ENCODE measurements at regions of chr7 and their contacts with region 1.

Region 1: DNA sequence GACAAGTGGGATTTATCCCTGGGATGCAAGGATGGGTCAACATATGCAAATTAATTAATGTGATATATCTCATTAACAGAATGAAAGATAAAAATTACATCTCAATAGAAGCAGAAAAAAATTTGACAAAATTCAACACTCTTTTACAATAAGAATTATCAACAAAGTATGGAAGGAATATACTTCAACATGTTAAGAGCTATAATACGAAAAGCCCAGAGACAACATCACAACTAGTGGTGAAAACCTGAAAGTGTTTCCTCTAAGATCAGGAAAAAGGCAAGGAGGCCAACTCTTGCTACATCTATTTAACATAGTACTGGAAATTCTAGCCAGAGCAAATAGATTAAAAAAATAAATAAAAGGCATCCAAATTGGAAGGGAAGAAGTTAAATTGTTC is 970.0 kb upstream of the POT1 start:
- DNase-seq: no peak
- ATAC-seq: no peak
- H3K4me3 ChIP-seq: no peak overlapping the region
- H3K4me3 Mint-ChIP-seq: no peak overlapping the region
- H3K27ac ChIP-seq: no peak overlapping the region
- H3K27ac Mint-ChIP-seq: no peak overlapping the region
- H3K4me1 ChIP-seq: no peaks in the 10 kb centered on the region
- H3K4me1 Mint-ChIP-seq: no peaks in the 10 kb centered on the region
- H3K27me3 ChIP-seq: no peaks in the 10 kb centered on the region
- H3K27me3 Mint-ChIP-seq: no peaks in the 10 kb centered on the region
- CTCF ChIP-seq: no peak

Region 2: DNA sequence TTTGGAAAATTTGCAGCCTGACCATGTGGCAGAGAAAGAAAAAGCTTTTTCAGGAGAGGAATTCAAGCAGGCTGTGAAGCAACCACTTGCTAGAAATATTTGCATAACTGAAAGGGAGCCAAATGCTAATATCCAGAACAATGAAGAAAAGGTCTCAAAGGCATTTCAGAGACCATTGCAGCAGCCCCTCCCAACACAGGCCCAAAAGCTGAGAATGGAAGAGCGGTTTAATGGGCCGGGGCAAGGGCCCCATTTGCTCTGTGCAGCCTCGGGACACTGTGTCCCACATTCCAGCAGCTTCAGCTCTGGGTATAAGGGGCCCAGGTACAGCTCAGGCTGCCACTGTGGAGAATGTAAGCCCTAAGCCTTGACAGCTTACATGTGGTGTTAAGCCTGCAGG is 51.9 kb before region 1 on chr7:
- CTCF ChIA-PET with region 1: no interaction called
- POLR2A ChIA-PET with region 1: no interaction called
- intact Hi-C with region 1: no loop called
- DNase-seq: no peak
- ATAC-seq: no peak
- H3K4me3 ChIP-seq: no peak overlapping the region
- H3K4me3 Mint-ChIP-seq: no peak overlapping the region
- H3K27ac ChIP-seq: no peak overlapping the region
- H3K27ac Mint-ChIP-seq: no peak overlapping the region
- H3K4me1 ChIP-seq: no peaks in the 10 kb centered on the region
- H3K4me1 Mint-ChIP-seq: no peaks in the 10 kb centered on the region
- H3K27me3 ChIP-seq: no peaks in the 10 kb centered on the region
- H3K27me3 Mint-ChIP-seq: no peaks in the 10 kb centered on the region
- CTCF ChIP-seq: no peak

Region 3: GRCh38 chr7:125878235-125878928 is 21.2 kb before region 1 on chr7:
- CTCF ChIA-PET with region 1: no interaction called
- POLR2A ChIA-PET with region 1: no interaction called
- intact Hi-C with region 1: no loop called
- DNase-seq: no peak
- ATAC-seq: no peak
- H3K4me3 ChIP-seq: no peak overlapping the region
- H3K4me3 Mint-ChIP-seq: no peak overlapping the region
- H3K27ac ChIP-seq: no peak overlapping the region
- H3K27ac Mint-ChIP-seq: no peak overlapping the region
- H3K4me1 ChIP-seq: no peaks in the 10 kb centered on the region
- H3K4me1 Mint-ChIP-seq: no peaks in the 10 kb centered on the region
- H3K27me3 ChIP-seq: no peaks in the 10 kb centered on the region
- H3K27me3 Mint-ChIP-seq: no peaks in the 10 kb centered on the region
- CTCF ChIP-seq: no peak

Region 4: GRCh38 chr7:126203185-126203584 is 303.6 kb after region 1 on chr7:
- CTCF ChIA-PET with region 1: no interaction called
- POLR2A ChIA-PET with region 1: no interaction called
- intact Hi-C with region 1: loop called (anchors 10 kb)
- DNase-seq: no peak
- ATAC-seq: no peak
- H3K4me3 ChIP-seq: no peak overlapping the region
- H3K4me3 Mint-ChIP-seq: no peak overlapping the region
- H3K27ac ChIP-seq: no peak overlapping the region
- H3K27ac Mint-ChIP-seq: no peak overlapping the region
- H3K4me1 ChIP-seq: no peaks in the 10 kb centered on the region
- H3K4me1 Mint-ChIP-seq: no peaks in the 10 kb centered on the region
- H3K27me3 ChIP-seq: no peaks in the 10 kb centered on the region
- H3K27me3 Mint-ChIP-seq: no peaks in the 10 kb centered on the region
- CTCF ChIP-seq: no peak

Measured in B cell (primary cell).